ENCODE measurements at regions of chr7 and their contacts with region 1.

Region 1: DNA sequence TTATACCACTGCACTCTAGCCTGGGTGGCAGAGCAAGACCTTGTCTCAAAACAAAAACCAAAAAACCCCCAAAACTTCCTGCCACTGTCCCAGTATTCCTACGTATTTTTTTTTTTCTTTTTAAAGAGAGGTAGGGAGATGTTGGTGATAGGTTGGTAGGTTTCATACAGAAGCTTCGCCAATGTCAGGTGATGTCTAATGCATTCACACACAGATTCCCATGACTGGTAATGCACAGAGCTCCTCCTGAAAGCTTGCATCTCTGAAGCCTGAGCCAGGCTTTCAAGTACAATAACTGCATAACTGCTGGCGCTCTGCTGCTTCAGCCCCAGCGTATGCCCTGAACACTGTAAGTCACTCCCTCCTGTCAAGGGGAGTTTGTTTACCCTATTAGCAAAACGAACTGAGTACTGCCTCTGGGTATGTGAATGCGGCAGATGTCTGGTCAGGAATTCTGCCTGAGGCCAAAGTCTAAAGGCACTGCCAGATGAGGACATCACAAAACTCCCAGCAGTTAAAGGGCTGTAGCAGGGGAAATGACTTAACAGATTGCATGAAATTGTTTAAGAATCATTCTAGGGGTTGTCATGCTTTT is 97.8 kb downstream of the NRCAM start:
- DNase-seq: peak; percentile 92 to 95
- H3K4me3 ChIP-seq: no peak overlapping the region
- H3K4me3 Mint-ChIP-seq: peak overlapping the region; percentile 4
- H3K27ac Mint-ChIP-seq: peak overlapping the region; percentile 42
- H3K4me1 ChIP-seq: peaks cover 34% of the 10 kb centered on the region
- H3K4me1 Mint-ChIP-seq: peaks cover 34% of the 10 kb centered on the region
- H3K27me3 ChIP-seq: no peaks in the 10 kb centered on the region
- H3K27me3 Mint-ChIP-seq: no peaks in the 10 kb centered on the region
- CTCF ChIP-seq: no peak

Region 2: DNA sequence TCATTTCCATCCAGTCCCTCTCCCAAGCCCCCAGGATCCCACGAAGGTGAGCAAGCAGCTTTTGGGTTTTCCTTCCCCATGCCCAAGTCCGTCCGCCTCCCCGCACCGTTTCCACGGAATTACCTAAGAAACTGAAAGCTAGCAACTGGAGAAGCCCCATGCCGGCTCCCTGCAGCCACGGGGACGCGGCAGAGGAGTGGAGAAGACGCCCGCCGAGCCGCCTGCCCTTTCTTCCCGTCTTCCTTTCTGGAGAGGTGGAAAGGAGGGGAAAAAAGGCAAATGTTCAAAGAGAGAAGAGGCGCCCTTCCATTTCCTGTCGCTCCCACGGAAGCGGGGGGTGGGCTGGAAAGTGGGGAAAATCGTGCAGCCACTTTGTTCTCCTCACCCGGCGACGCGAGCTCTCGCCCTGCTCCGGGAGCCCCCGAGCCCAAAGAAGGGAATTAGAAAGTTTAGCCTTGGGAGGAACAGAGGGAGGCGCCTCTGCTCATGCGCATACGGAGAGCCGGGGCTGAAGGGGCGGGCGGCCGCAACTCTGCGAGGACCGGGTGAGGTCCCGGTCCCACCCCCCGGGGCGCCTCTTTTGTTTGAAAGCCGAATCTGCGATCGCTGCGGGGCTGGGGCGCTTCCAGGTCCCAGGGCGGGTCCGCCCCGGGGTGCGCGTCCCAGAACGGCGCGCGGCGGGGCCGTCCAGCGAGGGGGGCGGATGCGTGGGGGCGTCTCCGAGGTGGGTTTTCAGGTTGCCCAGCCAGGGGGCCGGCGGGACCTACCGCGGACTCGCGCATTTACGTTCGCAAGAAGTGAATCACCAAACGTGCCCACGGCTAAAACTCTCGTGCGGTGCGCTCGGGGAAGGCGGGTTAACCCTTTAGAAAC is 355.5 kb before region 1 on chr7 and contains the start of gene LAMB1:
- CTCF ChIA-PET with region 1: no interaction called
- POLR2A ChIA-PET with region 1: no interaction called
- intact Hi-C with region 1: loop called (anchors 10 kb)
- DNase-seq: peak; percentile 93 to 94
- H3K4me3 ChIP-seq: peak within 1 kb of the TSS; percentile 94
- H3K4me3 Mint-ChIP-seq: peak within 1 kb of the TSS; percentile 79
- H3K27ac Mint-ChIP-seq: peak within 1 kb of the TSS; percentile 83
- H3K4me1 ChIP-seq: peaks cover 70% of the 10 kb centered on the region
- H3K4me1 Mint-ChIP-seq: peaks cover 38% of the 10 kb centered on the region
- H3K27me3 ChIP-seq: no peaks in the 10 kb centered on the region
- H3K27me3 Mint-ChIP-seq: no peaks in the 10 kb centered on the region
- CTCF ChIP-seq: no peak
- total RNA-seq, gene LAMB1: 418 and 431 TPM in 2 replicates

Region 3: DNA sequence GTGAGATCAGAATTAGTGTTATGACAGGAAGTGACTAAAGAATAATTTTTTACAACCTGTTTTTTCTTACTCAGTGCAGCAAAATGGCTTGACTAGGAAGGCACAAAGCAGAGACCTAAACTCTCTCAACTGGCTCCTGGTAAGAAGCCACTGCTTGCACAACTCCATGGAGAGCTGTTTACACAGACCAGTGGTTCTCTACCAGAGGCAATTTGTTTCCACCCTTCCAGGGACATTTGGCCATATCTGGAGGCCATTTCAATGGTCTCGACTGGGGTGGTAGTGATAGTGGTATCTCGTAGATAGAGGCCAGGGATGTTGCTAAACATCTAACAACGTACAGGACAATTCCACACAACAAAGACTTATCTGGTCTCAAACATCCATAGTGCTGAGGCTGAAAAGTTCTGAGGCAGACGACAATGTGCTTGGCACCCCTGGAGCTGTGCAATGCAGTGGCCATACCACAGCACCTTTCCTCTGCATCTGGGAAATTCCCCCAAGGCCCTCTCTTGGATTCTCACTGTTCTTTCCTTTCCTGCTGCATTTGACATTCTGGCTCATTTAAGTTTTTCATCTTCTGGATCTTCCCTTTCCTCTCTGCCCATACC is 122.9 kb before region 1 on chr7:
- CTCF ChIA-PET with region 1: no interaction called
- POLR2A ChIA-PET with region 1: no interaction called
- intact Hi-C with region 1: loop called (anchors 1 kb)
- DNase-seq: peak; percentile 78 to 89
- H3K4me3 ChIP-seq: no peak overlapping the region
- H3K4me3 Mint-ChIP-seq: peak overlapping the region; percentile 40
- H3K27ac Mint-ChIP-seq: peak overlapping the region; percentile 81
- H3K4me1 ChIP-seq: peaks cover 59% of the 10 kb centered on the region
- H3K4me1 Mint-ChIP-seq: peaks cover 39% of the 10 kb centered on the region
- H3K27me3 ChIP-seq: no peaks in the 10 kb centered on the region
- H3K27me3 Mint-ChIP-seq: no peaks in the 10 kb centered on the region
- CTCF ChIP-seq: no peak

Region 4: DNA sequence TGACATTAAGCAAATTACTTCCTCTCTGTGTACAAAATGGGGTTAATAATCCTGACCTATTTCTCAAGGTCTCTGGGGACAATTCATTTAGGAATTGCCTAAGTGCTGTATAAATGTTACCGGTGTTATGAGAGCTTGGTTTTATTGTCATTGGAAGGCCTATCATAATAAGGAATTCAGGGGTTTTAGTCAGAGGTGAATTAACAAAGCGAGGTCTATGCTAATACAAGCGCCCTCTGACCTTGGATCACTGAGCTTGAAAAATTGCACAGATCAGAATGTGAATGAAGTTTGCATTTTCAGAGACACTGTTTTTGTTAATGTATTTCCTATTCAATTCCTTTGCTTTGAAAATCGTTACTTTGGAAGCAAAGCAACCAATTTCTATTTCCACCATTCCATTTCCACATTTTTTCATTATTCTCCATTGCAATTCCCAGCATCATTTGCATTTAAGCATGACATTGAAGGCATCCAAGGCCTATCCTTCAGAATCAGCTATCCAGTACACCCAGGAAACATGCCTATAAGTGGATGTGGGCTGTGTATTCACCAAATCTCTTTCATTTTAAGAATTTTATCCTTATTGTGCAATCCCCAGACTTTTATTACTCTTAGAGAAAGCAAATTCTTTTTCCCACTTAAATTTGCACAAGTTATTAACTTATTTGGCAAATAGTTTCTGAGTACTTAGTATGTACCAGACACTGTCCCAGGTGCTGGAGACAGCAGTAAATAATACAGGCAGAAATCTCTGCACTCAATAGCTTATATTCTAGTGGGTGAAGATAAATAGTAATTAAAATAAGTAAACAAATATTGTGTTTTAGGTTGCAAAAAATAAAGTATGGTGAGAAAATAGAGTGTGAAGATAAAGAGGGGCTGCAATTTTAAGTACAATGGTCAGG is 35.3 kb before region 1 on chr7:
- CTCF ChIA-PET with region 1: no interaction called
- POLR2A ChIA-PET with region 1: no interaction called
- intact Hi-C with region 1: loop called (anchors 2 kb)
- DNase-seq: no peak
- H3K4me3 ChIP-seq: no peak overlapping the region
- H3K4me3 Mint-ChIP-seq: no peak overlapping the region
- H3K27ac Mint-ChIP-seq: peak overlapping the region; percentile 6
- H3K4me1 ChIP-seq: peaks cover 2% of the 10 kb centered on the region; the same call in 1 of the 2 replicates
- H3K4me1 Mint-ChIP-seq: peaks cover 23% of the 10 kb centered on the region
- H3K27me3 ChIP-seq: no peaks in the 10 kb centered on the region; the same call in 1 of the 2 replicates
- H3K27me3 Mint-ChIP-seq: no peaks in the 10 kb centered on the region
- CTCF ChIP-seq: no peak

Region 5: GRCh38 chr7:108340856-108341411 is 17.5 kb before region 1 on chr7:
- CTCF ChIA-PET with region 1: no interaction called
- POLR2A ChIA-PET with region 1: no interaction called
- intact Hi-C with region 1: loop called (anchors 1 kb)
- DNase-seq: peak; percentile 93 to 97
- H3K4me3 ChIP-seq: no peak overlapping the region
- H3K4me3 Mint-ChIP-seq: peak overlapping the region; percentile 58
- H3K27ac Mint-ChIP-seq: peak overlapping the region; percentile 81
- H3K4me1 ChIP-seq: peaks cover 38% of the 10 kb centered on the region
- H3K4me1 Mint-ChIP-seq: peaks cover 40% of the 10 kb centered on the region
- H3K27me3 ChIP-seq: no peaks in the 10 kb centered on the region
- H3K27me3 Mint-ChIP-seq: no peaks in the 10 kb centered on the region
- CTCF ChIP-seq: no peak

Region 6: DNA sequence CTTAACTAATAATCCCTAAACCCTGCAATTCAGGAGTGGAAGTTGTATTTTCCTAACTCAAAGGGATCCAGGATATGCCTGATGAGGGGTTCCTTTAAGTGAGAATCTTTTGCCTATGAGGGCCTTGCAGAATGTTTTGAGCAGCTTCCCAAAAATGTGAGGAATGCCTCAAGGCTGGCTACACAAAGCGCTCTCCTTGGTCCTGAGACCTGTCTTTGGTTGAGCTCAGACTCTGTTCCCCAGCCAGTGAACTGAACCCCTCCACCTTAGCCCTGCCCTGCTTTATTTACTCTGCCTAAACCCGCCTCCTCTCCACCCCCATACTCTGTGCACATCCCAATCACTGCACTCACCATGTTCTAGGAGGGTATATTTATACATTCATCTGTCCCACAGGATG is 10.8 kb before region 1 on chr7:
- CTCF ChIA-PET with region 1: interaction called, 11 read pairs
- POLR2A ChIA-PET with region 1: no interaction called
- intact Hi-C with region 1: no loop called
- DNase-seq: peak; percentile 72 to 75
- H3K4me3 ChIP-seq: no peak overlapping the region
- H3K4me3 Mint-ChIP-seq: no peak overlapping the region
- H3K27ac Mint-ChIP-seq: peak overlapping the region; percentile 23
- H3K4me1 ChIP-seq: peaks cover 51% of the 10 kb centered on the region
- H3K4me1 Mint-ChIP-seq: peaks cover 46% of the 10 kb centered on the region
- H3K27me3 ChIP-seq: no peaks in the 10 kb centered on the region
- H3K27me3 Mint-ChIP-seq: no peaks in the 10 kb centered on the region
- CTCF ChIP-seq: no peak

Region 7: DNA sequence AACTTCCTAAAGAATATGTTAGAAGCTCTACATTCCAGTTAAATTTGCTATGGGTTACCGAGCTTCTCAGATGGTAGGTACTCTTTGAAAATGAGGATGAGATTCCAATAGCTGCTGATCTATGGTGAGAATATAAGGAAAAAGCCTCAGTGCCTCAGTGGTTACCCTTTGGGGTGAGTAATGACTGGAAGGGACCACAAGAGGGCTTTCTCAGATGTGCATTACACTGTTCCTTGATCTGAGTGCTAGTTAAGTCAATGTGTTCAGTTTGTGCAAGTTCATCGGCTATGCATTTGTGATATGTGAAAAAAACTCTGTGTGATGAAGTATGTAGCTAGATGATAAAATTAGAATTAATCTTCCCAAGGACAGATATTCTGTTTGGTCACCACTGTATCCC is 94.3 kb after region 1 on chr7:
- CTCF ChIA-PET with region 1: no interaction called
- POLR2A ChIA-PET with region 1: no interaction called
- intact Hi-C with region 1: loop called (anchors 2 kb)
- DNase-seq: peak in 1 of 2 experiments; percentile 44
- H3K4me3 ChIP-seq: no peak overlapping the region
- H3K4me3 Mint-ChIP-seq: no peak overlapping the region
- H3K27ac Mint-ChIP-seq: no peak overlapping the region
- H3K4me1 ChIP-seq: peaks cover 45% of the 10 kb centered on the region
- H3K4me1 Mint-ChIP-seq: peaks cover 20% of the 10 kb centered on the region
- H3K27me3 ChIP-seq: no peaks in the 10 kb centered on the region
- H3K27me3 Mint-ChIP-seq: no peaks in the 10 kb centered on the region
- CTCF ChIP-seq: peak; percentile 64 to 71